Thyroid gland (tissue), 4 donors: ENCODE measurements at regions of chr9 and their contacts with region 1.

Region 1: DNA sequence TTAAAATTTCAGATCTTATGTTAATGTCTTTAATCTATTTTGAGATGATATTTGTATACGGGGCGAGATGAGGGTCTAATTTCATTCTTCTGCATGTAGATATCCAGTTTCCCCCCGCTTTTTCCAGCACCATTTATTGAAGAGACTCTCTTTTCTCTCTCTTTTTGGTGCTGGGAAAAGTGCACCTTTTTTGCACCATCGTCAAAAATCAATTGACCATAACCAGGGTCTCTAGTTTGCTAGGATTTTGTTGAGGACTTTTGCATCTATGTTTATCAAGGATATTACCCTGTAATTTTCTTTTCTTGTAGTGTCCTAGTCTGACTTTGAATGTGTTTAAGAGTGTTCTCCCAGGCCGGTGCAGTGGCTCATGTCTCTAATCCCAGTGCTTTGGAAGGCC is 93.3 kb downstream of the STX17 start:
- DNase-seq: no peak
- H3K4me3 ChIP-seq: no peak overlapping the region
- H3K27ac ChIP-seq: no peak overlapping the region
- H3K4me1 ChIP-seq: no peaks in the 10 kb centered on the region
- H3K27me3 ChIP-seq: no peaks in the 10 kb centered on the region
- CTCF ChIP-seq: no peak
- POLR2A ChIP-seq: no peak

Region 2: DNA sequence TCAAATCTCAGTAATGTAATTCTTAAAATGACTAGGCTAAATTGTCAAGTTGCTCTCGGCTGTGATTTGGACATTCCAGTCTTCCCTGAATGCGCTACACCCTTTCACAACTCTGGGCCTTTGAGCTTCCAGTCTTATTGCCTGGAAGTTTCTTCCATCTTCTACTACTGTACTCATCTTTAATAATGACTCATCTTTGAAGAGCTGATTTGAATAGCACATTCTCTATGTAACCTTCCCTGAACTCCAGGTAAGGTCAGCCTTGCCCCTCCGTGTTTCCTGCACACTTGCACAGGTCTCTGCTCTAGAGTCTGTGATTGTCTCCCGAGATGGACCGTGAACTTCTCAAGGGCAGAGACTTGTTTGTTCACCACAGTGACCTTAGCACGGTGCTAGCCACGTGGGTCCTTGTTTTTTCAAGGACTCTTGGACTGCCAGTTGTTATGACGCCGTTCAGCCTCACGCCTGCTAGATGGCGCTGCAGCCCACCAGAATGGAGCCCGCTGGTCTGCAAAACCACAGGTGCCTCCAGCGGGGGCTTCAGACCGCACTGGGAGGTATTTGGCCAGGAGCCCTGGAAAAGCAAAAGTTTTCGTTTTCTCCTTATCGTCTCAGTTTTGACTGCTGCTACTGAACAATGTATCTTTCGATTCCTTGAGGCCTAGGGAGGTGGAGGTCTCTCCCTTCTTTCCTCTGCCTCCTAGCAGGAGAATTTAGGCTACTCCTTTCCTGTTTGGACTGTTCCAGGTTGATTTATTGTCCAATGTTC is 733.4 kb before region 1 on chr9:
- intact Hi-C with region 1: loop called (anchors 10 kb)
- DNase-seq: peak; percentile 89 to 91
- H3K4me3 ChIP-seq: no peak overlapping the region
- H3K27ac ChIP-seq: peak overlapping the region in 2 of 3 donors; percentile 19 to 32
- H3K4me1 ChIP-seq: peaks cover 0 to 12% of the 10 kb centered on the region in 2 donors
- H3K27me3 ChIP-seq: no peaks in the 10 kb centered on the region
- CTCF ChIP-seq: peak; percentile 68 to 95 (median 88)
- POLR2A ChIP-seq: peak in 1 of 2 donors; percentile 19